Naive thymus-derived CD4-positive, alpha-beta T cell (primary cell): ENCODE measurements at regions of chr3 and their contacts with region 1.

Region 1: GRCh38 chr3:125437631-125438435 is 62.7 kb upstream of the ZNF148 start:
- DNase-seq: peak; percentile 26 to 68 (median 53)
- ATAC-seq: peak; percentile 78
- H3K4me3 ChIP-seq: no peak overlapping the region
- H3K4me3 Mint-ChIP-seq: no peak overlapping the region
- H3K27ac ChIP-seq: no peak overlapping the region
- H3K27ac Mint-ChIP-seq: no peak overlapping the region
- H3K4me1 ChIP-seq: no peaks in the 10 kb centered on the region
- H3K4me1 Mint-ChIP-seq: peaks cover 0 to 4% (median 0%) of the 10 kb centered on the region in 7 donors
- H3K27me3 ChIP-seq: no peaks in the 10 kb centered on the region
- H3K27me3 Mint-ChIP-seq: peaks cover 0 to 3% (median 0%) of the 10 kb centered on the region in 5 donors

Region 2: GRCh38 chr3:124761250-124761796 is 676.5 kb before region 1 on chr3:
- CTCF ChIA-PET with region 1: interaction called, 8 read pairs
- POLR2A ChIA-PET with region 1: no interaction called
- intact Hi-C with region 1: loop called (anchors 1 to 2 kb)
- DNase-seq: peak; percentile 52 to 76 (median 68)
- ATAC-seq: peak; percentile 92
- H3K4me3 ChIP-seq: no peak overlapping the region
- H3K4me3 Mint-ChIP-seq: peak overlapping the region in 9 of 10 donors; percentile 16 to 84 (median 72)
- H3K27ac ChIP-seq: no peak overlapping the region
- H3K27ac Mint-ChIP-seq: peak overlapping the region in 3 of 9 donors; percentile 5 to 92 (median 65)
- H3K4me1 ChIP-seq: no peaks in the 10 kb centered on the region
- H3K4me1 Mint-ChIP-seq: peaks cover 0 to 7% (median 5%) of the 10 kb centered on the region in 7 donors
- H3K27me3 ChIP-seq: no peaks in the 10 kb centered on the region
- H3K27me3 Mint-ChIP-seq: peaks cover 0 to 1% (median 0%) of the 10 kb centered on the region in 5 donors

Region 3: GRCh38 chr3:124995460-124995994 is 442.3 kb before region 1 on chr3:
- CTCF ChIA-PET with region 1: interaction called, 16 read pairs
- POLR2A ChIA-PET with region 1: no interaction called
- intact Hi-C with region 1: loop called (anchors 1 kb)
- DNase-seq: peak; percentile 28 to 69 (median 47)
- ATAC-seq: peak; percentile 93
- H3K4me3 ChIP-seq: no peak overlapping the region
- H3K4me3 Mint-ChIP-seq: peak overlapping the region in 2 of 10 donors; percentile 7 to 41
- H3K27ac ChIP-seq: no peak overlapping the region
- H3K27ac Mint-ChIP-seq: peak overlapping the region in 7 of 9 donors; percentile 21 to 80 (median 53)
- H3K4me1 ChIP-seq: no peaks in the 10 kb centered on the region
- H3K4me1 Mint-ChIP-seq: peaks cover 0 to 32% (median 19%) of the 10 kb centered on the region in 7 donors
- H3K27me3 ChIP-seq: no peaks in the 10 kb centered on the region
- H3K27me3 Mint-ChIP-seq: no peaks in the 10 kb centered on the region

Region 4: GRCh38 chr3:125150525-125151441 is 287.1 kb before region 1 on chr3:
- CTCF ChIA-PET with region 1: interaction called, 3 read pairs
- POLR2A ChIA-PET with region 1: no interaction called
- intact Hi-C with region 1: loop called (anchors 1 kb)
- DNase-seq: peak in 5 of 9 donors; percentile 30 to 45 (median 43)
- ATAC-seq: peak; percentile 74
- H3K4me3 ChIP-seq: no peak overlapping the region
- H3K4me3 Mint-ChIP-seq: no peak overlapping the region
- H3K27ac ChIP-seq: no peak overlapping the region
- H3K27ac Mint-ChIP-seq: peak overlapping the region in 2 of 9 donors; percentile 45 to 49
- H3K4me1 ChIP-seq: no peaks in the 10 kb centered on the region
- H3K4me1 Mint-ChIP-seq: peaks cover 0 to 28% (median 16%) of the 10 kb centered on the region in 7 donors
- H3K27me3 ChIP-seq: no peaks in the 10 kb centered on the region
- H3K27me3 Mint-ChIP-seq: peaks cover 0 to 37% (median 0%) of the 10 kb centered on the region in 5 donors

Region 5: DNA sequence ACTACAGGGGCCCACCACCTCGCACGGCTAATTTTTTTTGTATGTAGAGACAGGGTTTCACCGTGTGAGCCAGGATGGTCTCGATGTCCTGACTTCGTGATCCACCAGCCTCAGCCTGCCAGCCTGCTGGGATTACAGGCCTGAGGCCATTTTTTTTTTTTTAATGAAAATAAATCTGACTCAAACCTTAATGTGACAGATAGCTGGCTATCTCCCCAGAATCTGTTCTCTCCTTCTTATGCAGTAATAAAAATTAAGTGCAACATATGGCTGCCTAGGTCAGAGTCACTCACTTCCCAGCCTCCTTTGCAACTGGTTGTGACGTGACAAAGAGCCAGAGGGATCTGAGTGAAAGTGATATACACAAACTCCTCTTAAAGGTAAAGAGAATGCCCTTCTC is 115.7 kb before region 1 on chr3:
- CTCF ChIA-PET with region 1: no interaction called
- POLR2A ChIA-PET with region 1: no interaction called
- intact Hi-C with region 1: no loop called
- DNase-seq: no peak
- ATAC-seq: no peak
- H3K4me3 ChIP-seq: no peak overlapping the region
- H3K4me3 Mint-ChIP-seq: no peak overlapping the region
- H3K27ac ChIP-seq: no peak overlapping the region
- H3K27ac Mint-ChIP-seq: peak overlapping the region in 2 of 9 donors; percentile 1 to 42
- H3K4me1 ChIP-seq: no peaks in the 10 kb centered on the region
- H3K4me1 Mint-ChIP-seq: peaks cover 5 to 33% (median 15%) of the 10 kb centered on the region in 7 donors
- H3K27me3 ChIP-seq: no peaks in the 10 kb centered on the region
- H3K27me3 Mint-ChIP-seq: no peaks in the 10 kb centered on the region

Region 6: DNA sequence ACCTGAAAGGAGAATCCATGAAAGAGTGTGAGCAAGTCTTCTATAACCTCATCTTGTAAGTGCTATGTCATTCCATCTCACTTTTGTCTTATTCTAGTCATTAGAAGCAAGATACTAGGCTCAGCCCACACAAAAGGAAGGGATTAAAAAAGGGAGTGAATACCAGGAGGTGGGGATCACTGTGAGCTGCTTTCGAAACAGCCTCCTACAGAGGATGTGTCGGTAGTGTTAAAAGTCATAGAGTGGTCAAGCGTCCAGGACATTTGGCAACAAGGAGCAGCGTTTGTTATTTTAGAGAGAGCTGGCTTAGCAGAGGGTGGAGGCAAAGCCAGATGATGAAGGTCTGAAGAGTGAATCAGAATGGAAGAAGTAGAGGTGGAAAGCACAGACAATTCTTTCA is 51.0 kb before region 1 on chr3:
- CTCF ChIA-PET with region 1: no interaction called
- POLR2A ChIA-PET with region 1: no interaction called
- intact Hi-C with region 1: no loop called
- DNase-seq: no peak
- ATAC-seq: no peak
- H3K4me3 ChIP-seq: no peak overlapping the region
- H3K4me3 Mint-ChIP-seq: no peak overlapping the region
- H3K27ac ChIP-seq: no peak overlapping the region
- H3K27ac Mint-ChIP-seq: no peak overlapping the region
- H3K4me1 ChIP-seq: peaks cover 7 to 16% of the 10 kb centered on the region in 2 donors
- H3K4me1 Mint-ChIP-seq: peaks cover 16 to 30% (median 21%) of the 10 kb centered on the region in 7 donors
- H3K27me3 ChIP-seq: no peaks in the 10 kb centered on the region
- H3K27me3 Mint-ChIP-seq: peaks cover 0 to 21% (median 5%) of the 10 kb centered on the region in 5 donors

Region 7: DNA sequence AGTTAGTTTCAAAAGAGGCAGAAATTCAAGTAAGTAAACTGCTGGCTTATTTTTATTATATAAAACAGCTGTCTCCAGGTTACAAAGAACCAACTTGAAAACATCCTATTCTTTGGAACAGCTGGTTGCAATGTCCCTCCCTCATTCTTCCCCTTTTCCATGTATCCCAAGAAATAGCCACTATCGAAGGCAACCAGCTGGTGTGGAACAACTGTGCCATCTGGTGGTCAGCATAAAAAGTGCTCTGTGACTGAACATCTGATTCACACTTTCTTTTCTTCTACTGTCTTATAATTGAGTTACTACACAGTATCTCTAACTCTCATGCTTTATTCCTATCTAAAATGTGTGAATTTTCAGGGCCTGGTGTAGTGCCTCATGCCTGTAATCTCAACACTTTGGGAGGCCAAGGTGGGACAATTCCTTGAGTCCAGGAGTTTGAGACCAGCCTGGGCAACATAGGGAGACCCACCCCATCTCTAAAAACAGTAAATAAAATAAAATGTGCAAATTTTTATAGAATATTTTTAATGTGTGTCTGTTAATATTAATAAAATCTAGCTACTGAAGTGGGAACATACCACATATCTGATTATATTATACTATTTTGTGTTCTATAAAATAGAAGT is 147.9 kb after region 1 on chr3:
- CTCF ChIA-PET with region 1: interaction called, 4 read pairs
- POLR2A ChIA-PET with region 1: no interaction called
- intact Hi-C with region 1: loop called (anchors 1 to 10 kb)
- DNase-seq: peak in 8 of 9 donors; percentile 7 to 45 (median 24)
- ATAC-seq: peak; percentile 67
- H3K4me3 ChIP-seq: no peak overlapping the region
- H3K4me3 Mint-ChIP-seq: peak overlapping the region in 2 of 10 donors; percentile 17 to 33
- H3K27ac ChIP-seq: no peak overlapping the region
- H3K27ac Mint-ChIP-seq: peak overlapping the region in 1 of 9 donors; percentile 3
- H3K4me1 ChIP-seq: peaks cover 0 to 4% of the 10 kb centered on the region in 2 donors
- H3K4me1 Mint-ChIP-seq: peaks cover 10 to 41% (median 26%) of the 10 kb centered on the region in 7 donors
- H3K27me3 ChIP-seq: no peaks in the 10 kb centered on the region
- H3K27me3 Mint-ChIP-seq: no peaks in the 10 kb centered on the region

Region 8: GRCh38 chr3:126245811-126246727 is 808.2 kb after region 1 on chr3:
- CTCF ChIA-PET with region 1: no interaction called
- POLR2A ChIA-PET with region 1: no interaction called
- intact Hi-C with region 1: no loop called
- DNase-seq: no peak
- ATAC-seq: no peak
- H3K4me3 ChIP-seq: no peak overlapping the region
- H3K4me3 Mint-ChIP-seq: no peak overlapping the region
- H3K27ac ChIP-seq: no peak overlapping the region
- H3K27ac Mint-ChIP-seq: no peak overlapping the region
- H3K4me1 ChIP-seq: no peaks in the 10 kb centered on the region
- H3K4me1 Mint-ChIP-seq: no peaks in the 10 kb centered on the region
- H3K27me3 ChIP-seq: no peaks in the 10 kb centered on the region
- H3K27me3 Mint-ChIP-seq: peaks cover 3 to 33% (median 17%) of the 10 kb centered on the region in 5 donors